Mammary epithelial cell (primary cell): ENCODE measurements at regions of chr6 and their contacts with region 1.

Region 1: DNA sequence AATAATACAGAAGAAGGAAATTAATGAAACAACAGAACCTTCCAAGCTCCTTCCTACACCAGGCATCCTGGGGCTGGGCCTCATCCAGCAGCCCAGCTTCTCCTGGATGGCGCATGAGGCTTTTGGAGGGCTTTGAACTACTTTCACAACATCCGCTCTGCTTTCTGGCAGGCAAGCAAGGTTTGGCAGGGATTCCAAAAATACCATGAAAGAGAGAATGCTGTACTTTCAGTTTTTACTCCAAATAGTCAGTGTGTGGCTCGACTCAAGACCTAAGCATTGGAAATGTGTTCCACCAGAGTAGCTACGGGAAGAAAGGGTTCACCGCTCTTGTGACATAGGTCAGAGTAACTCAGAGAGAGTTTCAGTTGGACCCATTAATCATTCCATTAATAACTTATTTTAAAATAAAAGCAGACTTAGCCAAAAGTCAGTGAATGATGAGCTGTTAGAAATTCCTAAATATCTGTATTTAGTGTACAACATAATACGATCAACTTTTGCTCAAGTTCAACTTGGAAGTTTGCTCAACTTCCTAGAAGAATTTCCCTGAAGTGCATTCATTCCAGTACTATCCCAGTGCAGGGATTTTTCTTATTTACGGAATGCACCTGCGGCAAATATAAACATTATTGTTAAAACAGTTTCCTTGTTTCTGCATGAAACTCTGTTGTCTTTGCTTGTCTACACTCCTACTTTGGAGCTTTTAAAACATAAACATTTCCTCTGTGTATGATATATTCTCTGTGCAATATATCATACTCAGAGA is 125.5 kb downstream of the OPRM1 start:
- DNase-seq: no peak
- H3K4me3 ChIP-seq: no peak overlapping the region
- H3K27ac ChIP-seq: no peak overlapping the region
- H3K4me1 ChIP-seq: no peaks in the 10 kb centered on the region
- H3K27me3 ChIP-seq: peaks cover 3% of the 10 kb centered on the region
- CTCF ChIP-seq: no peak

Region 2: GRCh38 chr6:154276810-154277628 is 112.4 kb after region 1 on chr6:
- CTCF ChIA-PET with region 1: no interaction called
- dilution Hi-C with region 1: no loop called
- in situ Hi-C with region 1: loop called in 1 of 2 experiments (anchors 10 kb)
- intact Hi-C with region 1: no loop called
- DNase-seq: no peak
- H3K4me3 ChIP-seq: peak overlapping the region; percentile 30 to 53 (median 43)
- H3K27ac ChIP-seq: no peak overlapping the region
- H3K4me1 ChIP-seq: no peaks in the 10 kb centered on the region
- H3K27me3 ChIP-seq: no peaks in the 10 kb centered on the region
- CTCF ChIP-seq: peak; percentile 60 to 65

Region 3: DNA sequence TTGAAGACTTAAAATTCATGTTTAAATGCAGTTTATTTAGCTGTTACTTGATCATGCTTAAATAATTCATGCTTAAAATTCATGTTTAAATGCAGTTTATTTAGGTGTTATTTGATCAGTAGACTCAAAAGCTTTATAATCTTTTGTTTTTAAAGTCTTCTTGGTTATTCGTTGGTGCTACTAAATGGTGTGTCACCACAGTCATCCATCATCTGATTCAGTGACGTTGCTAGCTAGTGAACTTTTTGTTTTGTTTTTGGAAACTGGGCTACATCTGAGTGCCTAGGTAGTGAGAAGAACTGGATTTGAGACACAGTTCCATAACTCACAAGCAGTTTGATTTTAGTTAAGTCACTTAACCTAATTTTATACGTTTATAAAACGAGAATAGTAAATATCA is 589.6 kb after region 1 on chr6:
- CTCF ChIA-PET with region 1: no interaction called
- dilution Hi-C with region 1: no loop called
- in situ Hi-C with region 1: no loop called
- intact Hi-C with region 1: no loop called
- DNase-seq: peak; percentile 44
- H3K4me3 ChIP-seq: no peak overlapping the region
- H3K27ac ChIP-seq: peak overlapping the region; percentile 65
- H3K4me1 ChIP-seq: peaks cover 37% of the 10 kb centered on the region
- H3K27me3 ChIP-seq: no peaks in the 10 kb centered on the region
- CTCF ChIP-seq: no peak